ENCODE measurements at regions of chr2 and their contacts with region 1.

Region 1: DNA sequence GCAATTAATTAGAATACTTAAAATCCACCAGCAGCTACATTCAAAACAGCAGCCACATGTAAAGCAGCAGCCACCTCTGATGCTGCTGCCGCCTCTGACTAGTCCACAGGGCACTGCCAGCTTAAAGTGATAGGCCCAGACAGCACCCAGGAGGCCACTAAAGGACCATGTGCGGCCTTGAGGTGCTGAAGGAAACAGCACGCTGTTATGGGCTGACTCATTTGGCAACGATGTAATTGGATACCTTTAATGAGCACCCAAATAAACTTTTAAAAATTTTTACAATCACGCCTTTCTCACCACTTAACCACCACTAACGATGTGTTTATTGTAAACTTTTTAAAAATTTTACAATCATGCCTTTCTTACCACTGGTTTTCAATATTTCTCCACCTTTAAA is 209.3 kb upstream of the NCKAP5 start:
- DNase-seq: no peak
- ATAC-seq: peak in 1 of 2 donors; percentile 50

Region 2: GRCh38 chr2:133415210-133415876 is 362.3 kb before region 1 on chr2:
- intact Hi-C with region 1: loop called in 1 of 2 experiments (anchors 10 kb)
- DNase-seq: peak; percentile 35
- ATAC-seq: peak; percentile 84 to 87

Region 3: GRCh38 chr2:133568172-133568571 is 209.4 kb before region 1 on chr2 and contains the start of gene NCKAP5:
- intact Hi-C with region 1: loop called in 1 of 2 experiments (anchors 5 kb)
- DNase-seq: no peak
- ATAC-seq: peak; percentile 41 to 50
- total RNA-seq, gene NCKAP5: 5.8 to 6.2 TPM